ENCODE measurements at regions of chr3 and their contacts with region 1.

Region 1: GRCh38 chr3:18872466-18872865 is 275.8 kb upstream of the KCNH8 start:
- DNase-seq: no peak
- ATAC-seq: peak; percentile 43
- H3K4me3 Mint-ChIP-seq: no peak overlapping the region
- H3K27ac Mint-ChIP-seq: peak overlapping the region; percentile 20
- H3K4me1 Mint-ChIP-seq: peaks cover 67% of the 10 kb centered on the region
- H3K27me3 Mint-ChIP-seq: peaks cover 2% of the 10 kb centered on the region

Region 2: DNA sequence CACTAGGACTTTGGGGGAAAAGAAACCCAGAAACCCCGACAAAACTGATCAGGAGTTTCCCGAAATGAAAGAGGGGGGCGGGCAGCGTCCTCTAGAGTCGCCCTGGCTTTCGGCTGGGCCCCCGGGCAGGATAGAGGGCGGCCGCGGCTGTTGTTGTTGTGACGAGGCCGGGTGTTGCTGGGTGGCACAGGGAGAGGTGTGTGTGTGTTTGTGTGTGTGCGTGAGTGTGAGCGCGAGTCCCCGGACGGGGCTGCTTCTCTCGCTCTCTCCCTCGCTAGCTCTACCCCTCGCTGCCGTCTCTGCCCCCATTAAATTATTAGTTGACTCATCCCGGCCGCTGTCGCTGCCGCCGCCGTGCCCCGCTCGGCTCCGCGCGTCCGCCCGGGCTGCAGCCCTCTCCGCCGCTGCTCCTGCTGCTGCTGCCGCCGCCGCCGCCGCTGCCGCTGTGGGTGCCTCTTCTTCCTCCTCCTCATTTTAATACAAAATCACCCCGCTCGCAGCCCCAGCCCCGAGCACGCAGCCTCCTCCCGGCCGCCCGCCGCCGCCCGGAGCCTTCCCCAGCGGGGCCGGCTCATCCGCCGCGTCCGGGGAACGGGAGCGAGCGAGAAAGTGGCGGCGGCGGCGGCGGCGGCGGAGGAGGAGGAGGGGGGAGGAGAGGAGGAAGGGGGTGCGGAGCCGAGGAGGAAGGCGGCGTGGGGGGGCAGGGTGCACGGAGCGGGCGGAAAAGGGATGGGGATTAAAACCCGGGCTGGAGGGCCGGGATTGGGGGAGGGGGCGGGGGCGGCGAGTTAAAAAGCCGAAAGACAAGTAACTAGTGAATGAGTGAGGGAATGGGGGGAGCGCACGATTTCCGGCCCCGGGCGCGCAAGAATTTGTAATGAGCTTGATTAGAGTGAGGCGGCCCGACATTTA is 447.5 kb before region 1 on chr3 and contains the start of gene SATB1:
- CTCF ChIA-PET with region 1: no interaction called
- POLR2A ChIA-PET with region 1: interaction called, 4 read pairs
- intact Hi-C with region 1: loop called (anchors 5 kb)
- DNase-seq: peak; percentile 84
- ATAC-seq: peak; percentile 15
- H3K4me3 Mint-ChIP-seq: peak within 1 kb of the TSS; percentile 85
- H3K27ac Mint-ChIP-seq: peak within 1 kb of the TSS; percentile 97
- H3K4me1 Mint-ChIP-seq: peaks cover 71% of the 10 kb centered on the region
- H3K27me3 Mint-ChIP-seq: no peaks in the 10 kb centered on the region
- total RNA-seq, gene SATB1: 471 to 590 TPM

Region 3: DNA sequence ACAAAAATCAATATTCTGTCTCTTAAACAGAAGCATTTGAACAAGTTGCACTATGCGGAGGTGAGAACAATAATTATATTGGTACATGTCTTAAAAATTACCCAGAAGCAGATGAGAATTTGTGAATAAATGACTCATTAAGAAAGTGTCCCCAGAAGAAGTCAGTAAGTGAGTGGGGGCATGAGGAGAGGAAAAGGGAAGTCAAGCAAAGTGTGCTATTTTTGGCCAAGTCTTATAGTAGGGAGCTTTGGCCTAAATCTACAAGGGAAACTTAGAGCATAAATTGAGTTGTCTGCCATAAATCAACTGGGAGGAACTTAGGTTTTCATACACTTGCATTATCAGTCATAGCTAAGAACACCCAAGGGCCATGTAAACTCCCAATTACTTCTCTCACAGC is 360.5 kb before region 1 on chr3:
- CTCF ChIA-PET with region 1: no interaction called
- POLR2A ChIA-PET with region 1: no interaction called
- intact Hi-C with region 1: no loop called
- DNase-seq: no peak
- ATAC-seq: no peak
- H3K4me3 Mint-ChIP-seq: no peak overlapping the region
- H3K27ac Mint-ChIP-seq: no peak overlapping the region
- H3K4me1 Mint-ChIP-seq: peaks cover 17% of the 10 kb centered on the region
- H3K27me3 Mint-ChIP-seq: no peaks in the 10 kb centered on the region

Region 4: DNA sequence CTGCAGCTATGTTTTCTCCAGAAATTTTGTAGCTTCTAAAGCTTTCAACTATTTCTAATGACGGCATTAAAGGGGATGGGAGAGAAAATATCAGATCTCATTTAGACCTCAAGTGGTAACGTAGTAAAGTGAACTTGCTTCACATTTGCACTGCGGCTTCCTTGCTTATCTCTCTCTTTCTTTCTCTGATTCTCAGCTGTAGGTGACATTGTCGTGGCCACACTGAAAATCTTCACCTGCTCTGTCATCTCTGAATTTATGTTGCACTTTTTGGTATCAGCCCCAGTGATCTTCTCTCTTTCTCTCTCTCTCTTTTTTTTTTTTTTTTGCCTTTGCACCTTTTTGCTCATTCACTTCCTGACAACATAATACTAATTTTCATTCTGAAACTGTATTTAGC is 193.2 kb before region 1 on chr3:
- CTCF ChIA-PET with region 1: no interaction called
- POLR2A ChIA-PET with region 1: no interaction called
- intact Hi-C with region 1: loop called in 1 of 2 experiments (anchors 2 kb)
- DNase-seq: peak; percentile 69
- ATAC-seq: peak; percentile 87
- H3K4me3 Mint-ChIP-seq: peak overlapping the region; percentile 28
- H3K27ac Mint-ChIP-seq: peak overlapping the region; percentile 94
- H3K4me1 Mint-ChIP-seq: peaks cover 84% of the 10 kb centered on the region
- H3K27me3 Mint-ChIP-seq: no peaks in the 10 kb centered on the region

Region 5: DNA sequence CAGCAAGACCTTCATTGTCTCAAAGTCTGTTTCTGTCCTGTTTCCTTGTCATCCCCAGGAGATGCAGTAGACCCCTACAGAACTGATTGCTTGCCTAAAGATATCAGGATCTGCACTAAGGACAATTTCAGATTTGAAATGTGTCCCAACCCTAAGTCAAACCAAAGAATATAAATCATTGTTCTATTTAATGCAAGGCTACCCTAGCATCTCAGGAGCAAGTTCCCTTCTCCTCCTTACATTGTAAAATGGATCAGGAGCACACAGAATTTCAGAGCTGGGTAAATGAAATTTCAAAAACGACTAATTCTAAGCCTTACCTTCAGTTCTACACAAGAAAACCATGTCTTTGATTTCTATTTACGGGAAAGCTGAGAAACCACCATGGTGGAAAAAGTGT is 85.0 kb before region 1 on chr3:
- CTCF ChIA-PET with region 1: no interaction called
- POLR2A ChIA-PET with region 1: no interaction called
- intact Hi-C with region 1: no loop called
- DNase-seq: no peak
- ATAC-seq: no peak
- H3K4me3 Mint-ChIP-seq: no peak overlapping the region
- H3K27ac Mint-ChIP-seq: no peak overlapping the region
- H3K4me1 Mint-ChIP-seq: peaks cover 15% of the 10 kb centered on the region
- H3K27me3 Mint-ChIP-seq: no peaks in the 10 kb centered on the region

Region 6: GRCh38 chr3:18847583-18848197 is 24.8 kb before region 1 on chr3:
- CTCF ChIA-PET with region 1: interaction called, 25 read pairs
- POLR2A ChIA-PET with region 1: no interaction called
- intact Hi-C with region 1: loop called in 1 of 2 experiments (anchors 2 kb)
- DNase-seq: no peak
- ATAC-seq: peak; percentile 57
- H3K4me3 Mint-ChIP-seq: no peak overlapping the region
- H3K27ac Mint-ChIP-seq: no peak overlapping the region
- H3K4me1 Mint-ChIP-seq: peaks cover 29% of the 10 kb centered on the region
- H3K27me3 Mint-ChIP-seq: no peaks in the 10 kb centered on the region